ENCODE measurements at regions of chr10 and their contacts with region 1.

Region 1: DNA sequence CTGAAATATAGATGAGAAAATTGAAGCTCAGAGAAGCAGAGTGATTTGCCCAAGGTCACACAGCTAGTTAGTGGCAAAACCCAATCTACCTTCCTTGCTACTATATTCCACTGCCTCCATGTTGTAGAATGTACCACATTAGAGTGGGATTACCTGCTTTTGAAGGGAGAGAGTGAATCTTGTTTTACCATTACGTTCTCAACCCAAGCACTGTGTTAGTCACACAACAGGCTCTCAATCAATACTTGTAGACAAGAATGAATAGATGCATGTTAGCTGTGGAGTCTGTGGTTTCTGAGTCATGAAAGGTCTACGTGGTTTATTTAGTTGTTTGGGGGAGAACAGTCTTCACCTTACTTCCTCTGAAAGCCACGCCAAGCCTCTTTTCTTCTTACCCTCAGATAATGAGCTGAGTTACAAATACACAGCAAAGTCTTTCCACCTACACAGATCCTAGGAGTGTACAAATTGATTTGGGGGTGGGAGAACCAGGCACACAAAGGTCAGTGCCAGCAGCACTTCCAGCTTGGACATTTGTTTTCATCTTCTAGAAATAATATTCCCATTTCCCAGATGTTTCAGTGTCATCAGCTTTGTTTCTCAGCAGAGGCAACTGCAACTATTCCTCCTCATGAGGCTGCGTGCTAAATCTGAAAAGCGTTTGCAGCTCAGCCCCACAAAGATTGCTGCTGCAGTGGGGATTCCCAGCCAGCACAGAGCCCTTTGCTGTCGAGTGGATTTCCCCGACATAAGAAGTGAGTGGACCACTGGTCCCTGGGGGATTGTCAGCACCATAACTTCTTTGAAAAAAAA is 71.5 kb upstream of the ADO start:
- DNase-seq: peak; percentile 67
- H3K4me3 Mint-ChIP-seq: peak overlapping the region; percentile 26
- H3K27ac Mint-ChIP-seq: no peak overlapping the region
- H3K4me1 Mint-ChIP-seq: peaks cover 20% of the 10 kb centered on the region
- H3K27me3 Mint-ChIP-seq: peaks cover 5% of the 10 kb centered on the region

Region 2: DNA sequence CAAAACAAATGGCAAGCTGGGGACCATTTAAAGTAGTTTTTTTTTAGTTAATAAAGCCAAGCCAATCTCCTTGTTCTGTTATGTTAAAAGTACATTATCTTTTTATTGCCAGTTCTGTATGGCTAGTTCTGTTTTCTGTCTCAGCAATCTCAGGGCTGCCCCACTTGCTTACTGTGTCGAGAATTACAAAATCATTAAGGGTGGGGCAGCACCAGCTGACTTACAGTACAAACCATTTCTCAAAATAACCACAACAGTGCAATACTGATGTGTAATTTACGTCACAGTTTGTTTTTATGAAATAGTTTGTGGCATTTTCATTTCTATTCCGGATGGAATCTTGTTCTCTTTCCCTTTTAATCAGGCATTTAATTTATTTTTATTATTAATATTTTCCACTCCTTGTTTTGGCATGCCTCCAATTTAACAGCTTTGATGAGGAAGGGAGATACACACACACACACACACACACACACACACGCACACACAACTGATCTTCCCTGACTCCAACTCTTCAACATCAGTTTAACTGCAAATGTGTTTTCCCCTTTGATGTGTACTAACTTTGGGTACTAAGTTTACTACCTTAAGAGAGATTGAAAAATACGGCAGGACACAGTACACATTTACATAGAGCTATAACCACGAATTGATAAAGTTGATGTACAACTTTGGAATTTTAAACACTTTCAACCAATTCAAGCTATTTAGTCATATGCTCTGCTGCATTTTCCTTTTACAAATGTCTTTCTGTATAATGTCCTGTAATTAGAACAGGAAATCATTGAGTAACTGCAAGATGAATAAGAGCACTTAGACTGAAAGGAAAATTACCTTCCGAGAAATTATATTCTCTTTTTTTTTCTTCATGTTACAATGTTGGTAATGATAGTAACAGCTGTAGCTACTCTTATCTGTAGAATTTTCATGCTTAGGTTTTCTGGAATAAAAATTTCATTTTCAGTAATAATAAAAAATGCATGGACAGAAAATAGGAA is 740.1 kb before region 1 on chr10:
- CTCF ChIA-PET with region 1: no interaction called
- intact Hi-C with region 1: loop called (anchors 5 kb)
- DNase-seq: peak; percentile 84
- H3K4me3 Mint-ChIP-seq: peak overlapping the region; percentile 47
- H3K27ac Mint-ChIP-seq: peak overlapping the region; percentile 96
- H3K4me1 Mint-ChIP-seq: peaks cover 85% of the 10 kb centered on the region
- H3K27me3 Mint-ChIP-seq: no peaks in the 10 kb centered on the region

Region 3: GRCh38 chr10:62528441-62528840 is 204.6 kb before region 1 on chr10:
- CTCF ChIA-PET with region 1: no interaction called
- intact Hi-C with region 1: loop called (anchors 1 kb)
- DNase-seq: no peak
- H3K4me3 Mint-ChIP-seq: peak overlapping the region; percentile 19
- H3K27ac Mint-ChIP-seq: peak overlapping the region; percentile 26
- H3K4me1 Mint-ChIP-seq: peaks cover 37% of the 10 kb centered on the region
- H3K27me3 Mint-ChIP-seq: no peaks in the 10 kb centered on the region

Region 4: DNA sequence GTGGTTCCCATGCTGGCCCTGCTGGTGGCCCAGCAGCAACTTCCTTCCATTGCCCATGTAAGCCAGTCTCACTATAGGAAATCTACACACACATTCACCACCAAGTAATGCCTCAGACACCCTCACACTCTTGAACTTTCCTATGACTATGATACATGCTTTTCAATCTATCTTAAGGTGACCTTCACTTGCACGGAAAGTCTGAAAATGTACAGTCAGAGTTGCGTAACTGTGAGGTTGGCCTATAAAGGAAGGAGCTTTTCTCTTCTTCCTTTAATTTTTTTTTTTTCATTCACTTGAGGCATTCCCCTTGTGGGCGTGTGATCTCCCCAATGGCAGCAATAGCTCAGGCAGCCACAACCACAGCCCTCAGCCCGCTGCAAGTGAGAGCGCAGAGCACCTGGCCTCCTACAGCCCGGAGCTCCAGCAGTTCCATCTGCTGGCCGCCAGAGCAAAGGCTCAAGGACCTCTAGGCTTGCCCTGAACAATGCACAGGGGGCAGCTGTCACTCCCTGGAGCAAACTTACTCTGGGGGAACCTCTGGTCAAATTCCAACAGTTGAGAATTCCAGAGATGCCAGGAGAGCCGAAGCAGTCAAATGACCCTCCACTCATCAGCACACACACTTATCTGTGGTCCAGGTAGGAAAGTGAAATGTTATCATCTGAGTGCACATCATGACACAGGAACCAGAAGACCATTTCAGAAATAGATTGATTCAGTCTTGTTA is 51.7 kb before region 1 on chr10:
- CTCF ChIA-PET with region 1: interaction called, 16 read pairs
- intact Hi-C with region 1: loop called (anchors 1 kb)
- DNase-seq: peak; percentile 93
- H3K4me3 Mint-ChIP-seq: no peak overlapping the region
- H3K27ac Mint-ChIP-seq: peak overlapping the region; percentile 72
- H3K4me1 Mint-ChIP-seq: peaks cover 33% of the 10 kb centered on the region
- H3K27me3 Mint-ChIP-seq: no peaks in the 10 kb centered on the region

Region 5: DNA sequence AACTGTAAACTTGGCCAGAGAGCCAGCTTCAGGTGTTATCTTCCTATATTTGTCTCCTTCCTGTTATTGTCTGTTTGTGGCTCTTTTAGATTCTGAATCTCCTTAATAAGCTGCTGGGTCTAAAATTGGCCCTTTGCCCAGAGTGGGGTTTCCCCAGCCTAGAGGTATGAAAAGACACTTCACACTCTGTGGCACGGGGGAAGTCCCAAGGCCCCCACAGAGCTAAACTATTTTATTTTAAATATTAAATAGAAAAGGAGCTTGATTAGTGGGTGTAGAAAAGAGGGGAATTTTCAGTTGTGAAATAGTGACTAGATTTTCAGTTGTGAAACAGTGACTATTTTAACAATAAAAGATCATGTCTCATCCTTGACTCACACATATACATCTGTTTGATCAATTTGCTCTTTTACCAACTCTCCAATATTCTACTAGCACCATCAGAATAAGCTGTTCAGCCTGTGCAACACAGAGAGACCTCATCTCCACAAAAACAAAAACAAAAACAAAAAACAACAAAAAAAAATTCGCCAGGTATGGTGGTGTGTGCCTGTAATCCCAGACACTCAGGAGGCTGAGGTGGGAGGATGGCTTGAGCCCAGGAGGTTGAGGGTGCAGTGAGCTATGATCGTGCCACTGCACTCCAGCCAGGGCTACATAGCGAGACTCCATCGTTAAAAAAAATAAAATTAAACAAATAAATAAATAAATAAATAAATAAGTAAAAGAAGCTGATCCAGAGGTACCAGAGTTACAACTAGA is 46.6 kb after region 1 on chr10:
- CTCF ChIA-PET with region 1: interaction called, 19 read pairs
- intact Hi-C with region 1: loop called (anchors 1 kb)
- DNase-seq: peak; percentile 94
- H3K4me3 Mint-ChIP-seq: no peak overlapping the region
- H3K27ac Mint-ChIP-seq: peak overlapping the region; percentile 59
- H3K4me1 Mint-ChIP-seq: peaks cover 21% of the 10 kb centered on the region
- H3K27me3 Mint-ChIP-seq: no peaks in the 10 kb centered on the region

Region 6: GRCh38 chr10:62870866-62871265 is 137.8 kb after region 1 on chr10:
- CTCF ChIA-PET with region 1: no interaction called
- intact Hi-C with region 1: no loop called
- DNase-seq: peak; percentile 22
- H3K4me3 Mint-ChIP-seq: no peak overlapping the region
- H3K27ac Mint-ChIP-seq: no peak overlapping the region
- H3K4me1 Mint-ChIP-seq: peaks cover 5% of the 10 kb centered on the region
- H3K27me3 Mint-ChIP-seq: peaks cover 5% of the 10 kb centered on the region

Region 7: GRCh38 chr10:62980687-62981086 is 247.6 kb after region 1 on chr10:
- CTCF ChIA-PET with region 1: no interaction called
- intact Hi-C with region 1: loop called (anchors 1 kb)
- DNase-seq: peak; percentile 52
- H3K4me3 Mint-ChIP-seq: no peak overlapping the region
- H3K27ac Mint-ChIP-seq: peak overlapping the region; percentile 76
- H3K4me1 Mint-ChIP-seq: peaks cover 23% of the 10 kb centered on the region
- H3K27me3 Mint-ChIP-seq: peaks cover 8% of the 10 kb centered on the region